ENCODE measurements at regions of chr15 and their contacts with region 1.

Region 1: DNA sequence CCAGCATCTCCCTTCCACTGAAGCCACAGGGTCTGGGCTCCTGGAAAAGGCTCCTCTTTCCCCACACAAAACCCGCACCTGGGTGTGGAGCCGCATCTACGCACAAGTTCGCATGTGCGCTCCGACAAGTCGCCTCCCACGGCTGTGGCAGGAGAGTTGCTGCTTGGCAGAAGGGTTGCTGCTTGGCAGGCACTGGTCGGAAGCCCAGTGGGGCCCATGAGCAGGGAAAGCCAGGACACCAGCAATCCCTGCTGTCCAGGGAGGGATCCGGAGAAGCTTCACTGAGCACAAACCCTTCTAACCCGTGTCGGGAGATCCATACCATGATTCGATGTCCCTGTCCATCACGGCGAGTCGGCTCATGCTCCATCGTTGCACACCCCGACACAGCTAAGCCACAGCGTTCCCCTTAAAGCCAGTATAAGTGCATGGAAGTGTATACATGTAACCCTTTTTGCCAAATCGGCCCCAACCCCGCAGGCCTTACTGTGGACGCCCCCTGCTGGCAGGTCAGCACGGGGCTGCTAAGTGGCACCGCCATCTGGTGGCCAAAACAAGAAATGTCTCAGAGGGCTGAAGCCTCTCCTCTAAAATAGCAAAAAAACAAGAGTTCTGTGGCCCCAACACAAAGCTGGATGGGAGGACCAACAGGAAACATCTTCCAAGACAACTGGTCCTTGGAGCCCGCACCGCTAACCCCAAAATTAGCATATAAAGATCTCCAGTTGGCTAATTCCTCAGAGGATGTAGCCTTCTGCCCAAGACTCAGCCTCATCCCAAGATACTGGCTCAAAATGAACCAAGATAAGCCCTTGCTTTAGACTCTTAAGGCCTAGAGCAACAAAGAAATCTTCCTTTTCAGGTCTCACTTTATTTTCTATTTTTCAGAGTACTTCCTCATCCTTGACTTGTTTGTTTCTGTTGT is 8.3 kb downstream of the ANKRD63 start:
- DNase-seq: peak; percentile 90
- ATAC-seq: peak; percentile 75
- H3K4me3 Mint-ChIP-seq: no peak overlapping the region
- H3K27ac Mint-ChIP-seq: no peak overlapping the region
- H3K4me1 Mint-ChIP-seq: peaks cover 8% of the 10 kb centered on the region
- H3K27me3 Mint-ChIP-seq: peaks cover 30% of the 10 kb centered on the region

Region 2: DNA sequence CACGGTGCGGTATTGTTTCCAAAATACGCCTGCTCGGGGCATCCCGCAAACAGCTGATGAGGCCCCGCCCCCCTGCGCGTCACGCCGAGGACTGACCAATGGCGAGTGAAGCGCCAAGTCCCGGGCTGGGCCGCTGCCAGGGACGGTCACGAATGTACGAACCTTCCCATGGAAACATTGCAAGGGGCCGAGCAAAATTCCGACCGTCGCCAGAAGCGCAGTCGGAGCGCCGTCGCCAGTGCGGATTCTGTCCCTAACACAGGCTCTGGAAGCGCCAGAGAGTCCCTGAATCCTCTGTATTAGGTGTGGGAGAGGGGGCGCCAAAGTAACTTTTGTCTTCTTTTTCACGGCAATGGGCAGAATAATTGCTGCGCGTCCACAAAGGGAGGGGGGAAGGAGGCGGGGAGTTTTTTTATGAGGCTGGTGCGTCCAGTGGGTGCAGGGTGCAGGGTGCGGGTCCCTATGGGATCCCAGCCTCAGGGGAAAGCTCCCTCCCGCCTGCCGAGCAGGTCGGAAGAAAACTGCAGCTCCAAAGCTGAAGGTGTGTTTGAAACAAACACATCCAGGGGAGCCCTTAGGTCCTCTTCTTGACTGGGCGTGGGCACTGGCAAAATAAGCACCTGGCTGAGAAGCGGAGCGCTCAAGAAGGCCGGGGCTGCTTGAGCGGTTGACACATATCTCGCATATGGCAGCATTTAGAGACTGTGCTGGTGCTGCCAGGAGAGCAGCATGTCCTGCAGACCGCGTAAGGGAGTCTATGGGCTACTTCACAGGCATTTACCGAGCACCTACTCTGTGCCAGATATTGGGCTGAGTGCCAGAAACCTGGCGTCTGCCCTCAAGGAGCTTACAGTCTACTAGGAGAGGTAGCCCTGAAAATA is 165.5 kb before region 1 on chr15 and contains the start of gene BMF:
- CTCF ChIA-PET with region 1: interaction called, 11 read pairs
- DNase-seq: peak; percentile 97
- ATAC-seq: peak; percentile 84
- H3K4me3 Mint-ChIP-seq: peak within 1 kb of the TSS; percentile 82
- H3K27ac Mint-ChIP-seq: peak within 1 kb of the TSS; percentile 76
- H3K4me1 Mint-ChIP-seq: peaks cover 46% of the 10 kb centered on the region
- H3K27me3 Mint-ChIP-seq: peaks cover 28% of the 10 kb centered on the region
- total RNA-seq, gene BMF: 3.6 to 13.0 TPM

Region 3: GRCh38 chr15:40238532-40239403 is 35.8 kb before region 1 on chr15 and contains the start of gene PAK6:
- CTCF ChIA-PET with region 1: interaction called, 11 read pairs
- DNase-seq: no peak
- ATAC-seq: peak; percentile 65
- H3K4me3 Mint-ChIP-seq: no peak within 1 kb of the TSS
- H3K27ac Mint-ChIP-seq: no peak within 1 kb of the TSS
- H3K4me1 Mint-ChIP-seq: peaks cover 18% of the 10 kb centered on the region
- H3K27me3 Mint-ChIP-seq: peaks cover 28% of the 10 kb centered on the region
- total RNA-seq, gene PAK6: 1.0 to 1.7 TPM

Region 4: GRCh38 chr15:40301467-40302179 is 27.0 kb after region 1 on chr15:
- CTCF ChIA-PET with region 1: interaction called, 411 read pairs
- DNase-seq: no peak
- ATAC-seq: no peak
- H3K4me3 Mint-ChIP-seq: no peak overlapping the region
- H3K27ac Mint-ChIP-seq: no peak overlapping the region
- H3K4me1 Mint-ChIP-seq: peaks cover 11% of the 10 kb centered on the region
- H3K27me3 Mint-ChIP-seq: no peaks in the 10 kb centered on the region

Region 5: GRCh38 chr15:40330368-40330836 is 55.8 kb after region 1 on chr15:
- CTCF ChIA-PET with region 1: interaction called, 270 read pairs
- DNase-seq: no peak
- ATAC-seq: no peak
- H3K4me3 Mint-ChIP-seq: no peak overlapping the region
- H3K27ac Mint-ChIP-seq: no peak overlapping the region
- H3K4me1 Mint-ChIP-seq: peaks cover 13% of the 10 kb centered on the region
- H3K27me3 Mint-ChIP-seq: peaks cover 6% of the 10 kb centered on the region